Right ventricle myocardium superior (tissue), 1 donor: ENCODE measurements at regions of chr4 and their contacts with region 1.

Region 1: GRCh38 chr4:138035781-138036258 is 206.3 kb downstream of the SLC7A11 start:
- DNase-seq: no peak
- ATAC-seq: peak; percentile 95

Region 2: GRCh38 chr4:137775701-137776100 is 260.1 kb before region 1 on chr4:
- intact Hi-C with region 1: no loop called
- DNase-seq: no peak
- ATAC-seq: no peak

Region 3: GRCh38 chr4:138090150-138090917 is 54.5 kb after region 1 on chr4:
- intact Hi-C with region 1: loop called (anchors 5 kb)
- DNase-seq: peak; percentile 46
- ATAC-seq: peak; percentile 84

Region 4: GRCh38 chr4:138320831-138321230 is 285.0 kb after region 1 on chr4:
- intact Hi-C with region 1: no loop called
- DNase-seq: no peak
- ATAC-seq: no peak

Region 5: GRCh38 chr4:138680989-138681604 is 645.3 kb after region 1 on chr4:
- intact Hi-C with region 1: loop called (anchors 5 kb)
- DNase-seq: peak; percentile 77
- ATAC-seq: peak; percentile 79

Region 6: DNA sequence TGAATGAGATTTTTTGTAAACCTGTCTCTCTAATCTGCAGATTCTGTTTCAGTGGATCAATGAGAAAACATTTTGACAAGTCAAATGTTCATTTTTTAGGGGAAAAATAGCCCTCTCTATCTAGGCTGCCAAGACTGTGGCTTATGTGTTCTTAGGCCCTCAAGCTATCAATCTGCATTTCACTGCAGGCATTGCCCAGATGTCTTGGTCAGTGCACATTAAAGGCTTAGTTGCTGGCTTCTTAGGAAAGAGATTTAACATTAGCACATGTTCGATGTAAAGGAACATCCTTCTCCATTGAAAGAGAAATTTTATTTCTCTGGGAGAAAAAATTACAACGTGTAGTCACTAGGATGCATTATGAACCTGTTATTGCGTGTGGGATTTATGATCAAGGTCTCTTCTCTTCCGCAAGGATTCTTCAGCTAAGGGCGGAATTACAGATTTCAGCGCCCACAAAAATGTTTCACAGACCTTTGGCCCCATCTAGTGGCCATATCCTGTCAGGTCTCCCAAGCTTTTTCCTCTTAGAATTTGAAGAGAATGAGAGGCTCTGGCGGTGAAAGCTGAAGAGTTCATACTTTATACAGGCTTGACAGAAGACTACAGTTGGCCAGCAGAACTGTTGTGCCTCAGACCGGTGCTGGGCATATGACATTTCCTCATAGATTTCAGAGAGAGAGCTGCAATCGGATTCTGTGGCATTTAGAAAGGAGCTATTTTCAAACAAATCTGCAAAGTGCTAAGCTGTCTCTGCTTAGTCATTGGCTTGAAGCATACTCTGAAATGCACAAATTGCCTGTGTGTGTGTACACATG is 835.1 kb after region 1 on chr4:
- intact Hi-C with region 1: loop called (anchors 5 kb)
- DNase-seq: no peak
- ATAC-seq: peak; percentile 83